Natural killer cell (primary cell): ENCODE measurements at regions of chr15 and their contacts with region 1.

Region 1: GRCh38 chr15:89430530-89431341 is 65.6 kb downstream of the RHCG start:
- DNase-seq: peak; percentile 88 to 90
- ATAC-seq: peak; percentile 86 to 98 (median 97)
- H3K4me3 ChIP-seq: peak overlapping the region; percentile 34
- H3K4me3 Mint-ChIP-seq: peak overlapping the region; percentile 84
- H3K27ac ChIP-seq: no peak overlapping the region
- H3K27ac Mint-ChIP-seq: no peak overlapping the region
- H3K4me1 ChIP-seq: peaks cover 9% of the 10 kb centered on the region
- H3K4me1 Mint-ChIP-seq: peaks cover 5 to 7% of the 10 kb centered on the region in 2 donors
- H3K27me3 ChIP-seq: no peaks in the 10 kb centered on the region
- H3K27me3 Mint-ChIP-seq: peaks cover 19 to 29% of the 10 kb centered on the region in 2 donors
- CTCF ChIP-seq: peak; percentile 96

Region 2: DNA sequence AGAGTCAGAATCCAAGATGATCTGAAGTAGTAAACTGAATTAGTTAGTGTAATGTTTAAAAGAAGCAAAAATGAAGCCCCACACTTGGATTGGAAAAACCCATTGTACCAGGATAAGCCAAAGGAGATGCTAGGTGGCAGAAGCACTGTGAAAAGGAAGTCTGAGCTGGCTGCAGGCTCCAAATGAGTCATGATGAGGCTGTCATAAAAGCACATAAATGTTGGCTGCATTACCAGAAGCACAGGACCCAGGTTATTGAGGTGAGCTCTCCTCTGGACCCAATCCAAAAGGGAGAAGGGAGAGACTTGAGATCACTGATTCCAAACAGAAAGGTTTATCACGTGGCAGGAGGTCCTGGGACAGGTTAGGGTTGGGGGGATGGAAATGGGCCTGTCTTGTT is 630.7 kb before region 1 on chr15:
- intact Hi-C with region 1: no loop called
- DNase-seq: no peak
- ATAC-seq: no peak
- H3K4me3 ChIP-seq: no peak overlapping the region
- H3K4me3 Mint-ChIP-seq: no peak overlapping the region
- H3K27ac ChIP-seq: no peak overlapping the region
- H3K27ac Mint-ChIP-seq: no peak overlapping the region
- H3K4me1 ChIP-seq: no peaks in the 10 kb centered on the region
- H3K4me1 Mint-ChIP-seq: peaks cover 0 to 4% of the 10 kb centered on the region in 2 donors
- H3K27me3 ChIP-seq: peaks cover 13% of the 10 kb centered on the region
- H3K27me3 Mint-ChIP-seq: peaks cover 62 to 87% of the 10 kb centered on the region in 2 donors
- CTCF ChIP-seq: no peak

Region 3: DNA sequence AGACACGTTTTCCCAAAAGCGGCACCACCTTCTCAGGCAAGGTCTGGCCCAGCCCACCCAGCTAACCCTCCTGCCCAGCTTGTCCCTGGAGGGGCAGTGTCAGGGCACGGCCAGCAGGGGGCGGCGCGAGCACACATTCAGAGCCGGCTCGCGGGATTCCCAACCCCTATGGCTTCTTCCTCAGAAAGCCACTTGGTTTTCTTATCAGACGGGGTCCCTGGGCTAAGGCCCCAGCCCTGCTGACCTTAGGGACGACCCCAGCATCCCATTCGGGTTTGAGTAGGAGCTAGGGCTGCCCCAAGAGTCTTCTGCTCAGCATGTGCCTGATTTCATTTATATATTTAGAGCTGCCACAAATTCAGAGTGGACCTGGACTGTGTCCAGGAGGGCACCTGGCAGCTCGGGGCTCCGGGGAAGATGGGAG is 223.8 kb before region 1 on chr15:
- intact Hi-C with region 1: loop called (anchors 1 kb)
- DNase-seq: peak; percentile 69 to 81
- ATAC-seq: peak; percentile 77 to 81 (median 77)
- H3K4me3 ChIP-seq: no peak overlapping the region
- H3K4me3 Mint-ChIP-seq: peak overlapping the region; percentile 13
- H3K27ac ChIP-seq: no peak overlapping the region
- H3K27ac Mint-ChIP-seq: peak overlapping the region in 1 of 2 donors; percentile 49
- H3K4me1 ChIP-seq: peaks cover 43% of the 10 kb centered on the region
- H3K4me1 Mint-ChIP-seq: peaks cover 27 to 40% of the 10 kb centered on the region in 2 donors
- H3K27me3 ChIP-seq: no peaks in the 10 kb centered on the region
- H3K27me3 Mint-ChIP-seq: no peaks in the 10 kb centered on the region
- CTCF ChIP-seq: peak; percentile 99

Region 4: DNA sequence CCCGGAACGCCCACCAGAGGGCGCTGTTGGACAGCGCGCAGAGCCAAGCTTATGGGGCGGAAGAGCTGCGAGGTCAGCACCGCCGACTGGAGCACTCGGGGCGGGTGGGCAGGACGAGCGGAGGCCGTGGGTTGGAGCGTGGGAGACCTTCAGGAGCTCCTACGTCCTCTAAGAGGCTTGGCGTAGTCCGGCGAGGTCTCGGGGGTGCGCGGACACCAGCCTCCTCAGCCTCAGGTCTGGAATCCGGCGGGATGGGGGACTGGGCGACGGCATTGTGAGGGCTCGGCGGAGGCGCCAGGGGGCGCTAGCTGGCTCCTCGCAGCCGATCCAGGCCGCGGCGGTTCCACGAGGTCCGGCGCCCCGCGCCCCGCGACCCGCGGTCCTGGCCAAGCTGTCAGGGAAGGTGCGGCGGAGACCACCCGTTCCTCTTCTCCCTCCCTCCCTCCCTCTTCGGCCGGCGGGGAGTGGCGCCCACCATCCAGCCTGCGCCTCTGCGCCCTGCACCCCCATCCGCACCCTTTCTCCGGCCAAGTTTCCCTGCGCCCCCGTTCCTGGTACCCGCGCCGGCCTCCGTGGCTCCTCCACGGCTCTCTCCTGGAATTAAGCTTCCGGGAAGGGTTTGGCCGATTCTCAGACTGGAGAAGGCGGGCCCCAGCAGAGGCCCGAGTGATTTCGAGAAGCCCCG is 71.8 kb before region 1 on chr15:
- intact Hi-C with region 1: loop called (anchors 1 kb)
- DNase-seq: peak; percentile 82 to 91
- ATAC-seq: peak; percentile 91 to 96 (median 91)
- H3K4me3 ChIP-seq: peak overlapping the region; percentile 35
- H3K4me3 Mint-ChIP-seq: peak overlapping the region; percentile 72
- H3K27ac ChIP-seq: no peak overlapping the region
- H3K27ac Mint-ChIP-seq: peak overlapping the region in 1 of 2 donors; percentile 45
- H3K4me1 ChIP-seq: peaks cover 21% of the 10 kb centered on the region
- H3K4me1 Mint-ChIP-seq: peaks cover 0 to 12% of the 10 kb centered on the region in 2 donors
- H3K27me3 ChIP-seq: peaks cover 61% of the 10 kb centered on the region
- H3K27me3 Mint-ChIP-seq: peaks cover 62 to 79% of the 10 kb centered on the region in 2 donors
- CTCF ChIP-seq: peak; percentile 99

Region 5: DNA sequence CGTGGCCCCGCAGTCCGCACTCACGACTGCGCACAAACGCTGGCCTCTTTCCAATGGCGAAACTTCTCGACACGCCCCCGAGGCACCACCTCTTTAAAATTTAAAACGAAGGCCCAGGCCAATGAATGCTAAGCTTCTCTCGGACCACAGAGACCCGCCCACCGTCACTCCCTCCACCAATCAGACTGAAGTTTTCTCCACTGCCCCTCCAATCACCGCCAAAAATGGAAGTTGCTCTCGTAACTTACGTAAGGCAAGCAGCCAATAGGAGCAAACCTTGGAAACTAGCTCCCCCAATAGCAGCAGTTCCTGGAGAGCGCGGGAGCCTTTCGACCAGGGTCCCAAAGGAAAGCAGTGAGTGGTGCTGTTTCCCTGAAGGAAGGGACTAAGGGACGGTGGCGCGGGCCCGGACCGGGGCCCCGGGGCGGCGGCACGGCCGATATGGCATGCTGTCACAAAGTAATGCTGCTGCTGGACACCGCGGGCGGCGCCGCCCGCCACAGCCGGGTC is 144.5 kb after region 1 on chr15 and contains the start of gene TICRR:
- intact Hi-C with region 1: no loop called
- DNase-seq: peak; percentile 92 to 98
- ATAC-seq: peak; percentile 97 to 99 (median 97)
- H3K4me3 ChIP-seq: peak within 1 kb of the TSS; percentile 61
- H3K4me3 Mint-ChIP-seq: peak within 1 kb of the TSS; percentile 82
- H3K27ac ChIP-seq: no peak within 1 kb of the TSS
- H3K27ac Mint-ChIP-seq: peak within 1 kb of the TSS; percentile 62 to 69
- H3K4me1 ChIP-seq: peaks cover 11% of the 10 kb centered on the region
- H3K4me1 Mint-ChIP-seq: peaks cover 16 to 18% of the 10 kb centered on the region in 2 donors
- H3K27me3 ChIP-seq: no peaks in the 10 kb centered on the region
- H3K27me3 Mint-ChIP-seq: peaks cover 10 to 16% of the 10 kb centered on the region in 2 donors
- CTCF ChIP-seq: no peak
- total RNA-seq, gene TICRR: 0.13 to 0.59 (median 0.14) TPM